PC-9 (cell line): ENCODE measurements at regions of chr1 and their contacts with region 1.

Region 1: GRCh38 chr1:42259059-42259738 is 75.8 kb downstream of the FOXJ3 start:
- DNase-seq: no peak
- H3K4me3 ChIP-seq: no peak overlapping the region
- H3K27ac ChIP-seq: no peak overlapping the region
- H3K4me1 ChIP-seq: no peaks in the 10 kb centered on the region
- H3K27me3 ChIP-seq: no peaks in the 10 kb centered on the region
- CTCF ChIP-seq: no peak

Region 2: DNA sequence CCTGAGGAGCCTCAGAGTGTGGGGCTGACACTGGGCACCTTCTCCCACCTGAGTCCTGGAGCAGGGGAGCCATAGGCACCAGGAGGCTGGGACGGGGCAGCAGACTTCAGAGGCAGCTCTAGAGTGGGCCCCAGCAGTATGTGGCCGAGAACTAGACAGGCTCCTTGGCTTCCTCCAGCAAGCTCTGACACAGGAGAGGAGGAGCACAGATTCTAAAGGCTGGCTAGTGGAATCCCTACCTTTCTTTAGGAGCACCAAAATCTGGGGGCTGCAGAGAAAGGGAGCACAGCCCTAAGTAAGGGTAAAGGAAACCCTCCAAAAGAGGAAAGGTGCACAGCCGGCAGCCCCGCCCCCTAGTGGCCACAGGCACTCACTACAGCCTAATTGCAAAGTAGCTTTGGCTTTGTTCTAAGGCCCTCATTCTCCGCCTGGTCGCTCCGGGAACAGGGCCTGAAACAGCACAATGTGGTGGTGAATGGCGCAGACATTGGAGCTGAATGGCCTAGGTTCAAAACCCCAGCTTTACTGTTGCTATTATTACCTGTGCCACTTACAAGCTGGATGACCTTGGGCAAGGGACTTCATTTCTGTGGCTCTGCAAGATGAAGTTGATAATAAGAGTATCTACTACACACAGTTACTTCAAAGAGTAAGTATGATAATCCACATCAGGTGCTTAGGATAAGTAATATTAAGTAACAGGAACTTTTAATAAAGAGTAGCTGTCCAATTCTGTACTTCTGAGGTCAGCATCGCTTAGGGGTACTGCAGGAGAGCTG is 85.9 kb before region 1 on chr1:
- CTCF ChIA-PET with region 1: interaction called, 11 read pairs
- POLR2A ChIA-PET with region 1: no interaction called
- intact Hi-C with region 1: no loop called
- DNase-seq: peak in 1 of 2 experiments; percentile 65
- H3K4me3 ChIP-seq: no peak overlapping the region
- H3K27ac ChIP-seq: 0 out of 2 replicates have a peak overlapping the region, but pooled peaks have one; percentile 1
- H3K4me1 ChIP-seq: peaks cover 47% of the 10 kb centered on the region
- H3K27me3 ChIP-seq: no peaks in the 10 kb centered on the region
- CTCF ChIP-seq: peak; percentile 98

Region 3: GRCh38 chr1:42681741-42682483 is 422.7 kb after region 1 on chr1 and contains the start of gene YBX1:
- CTCF ChIA-PET with region 1: no interaction called
- POLR2A ChIA-PET with region 1: no interaction called
- intact Hi-C with region 1: no loop called
- DNase-seq: peak; percentile 96 to 98
- H3K4me3 ChIP-seq: peak within 1 kb of the TSS; percentile 93
- H3K27ac ChIP-seq: peak within 1 kb of the TSS; percentile 79
- H3K4me1 ChIP-seq: peaks cover 41% of the 10 kb centered on the region
- H3K27me3 ChIP-seq: no peaks in the 10 kb centered on the region
- CTCF ChIP-seq: no peak
- total RNA-seq, gene YBX1: 656 and 1,130 TPM in 2 replicates